ENCODE measurements at regions of chr6 and their contacts with region 1.

Region 1: GRCh38 chr6:79570129-79571029 is 33.1 kb upstream of the LCA5 start:
- DNase-seq: peak; percentile 74
- H3K4me3 ChIP-seq: peak overlapping the region in 1 of 3 experiments; percentile 19
- H3K27ac ChIP-seq: peak overlapping the region; percentile 51
- H3K4me1 ChIP-seq: peaks cover 25% of the 10 kb centered on the region
- H3K27me3 ChIP-seq: no peaks in the 10 kb centered on the region
- CTCF ChIP-seq: peak; percentile 41 to 48
- POLR2A ChIP-seq: no peak

Region 2: GRCh38 chr6:79544939-79545450 is 25.4 kb before region 1 on chr6:
- CTCF ChIA-PET with region 1: interaction called, 18 read pairs
- POLR2A ChIA-PET with region 1: no interaction called
- dilution Hi-C with region 1: no loop called
- intact Hi-C with region 1: loop called (anchors 1 kb)
- DNase-seq: peak; percentile 99
- H3K4me3 ChIP-seq: no peak overlapping the region
- H3K27ac ChIP-seq: peak overlapping the region; percentile 86
- H3K4me1 ChIP-seq: peaks cover 24% of the 10 kb centered on the region
- H3K27me3 ChIP-seq: no peaks in the 10 kb centered on the region
- CTCF ChIP-seq: peak; percentile 60 to 62
- POLR2A ChIP-seq: peak; percentile 28

Region 3: DNA sequence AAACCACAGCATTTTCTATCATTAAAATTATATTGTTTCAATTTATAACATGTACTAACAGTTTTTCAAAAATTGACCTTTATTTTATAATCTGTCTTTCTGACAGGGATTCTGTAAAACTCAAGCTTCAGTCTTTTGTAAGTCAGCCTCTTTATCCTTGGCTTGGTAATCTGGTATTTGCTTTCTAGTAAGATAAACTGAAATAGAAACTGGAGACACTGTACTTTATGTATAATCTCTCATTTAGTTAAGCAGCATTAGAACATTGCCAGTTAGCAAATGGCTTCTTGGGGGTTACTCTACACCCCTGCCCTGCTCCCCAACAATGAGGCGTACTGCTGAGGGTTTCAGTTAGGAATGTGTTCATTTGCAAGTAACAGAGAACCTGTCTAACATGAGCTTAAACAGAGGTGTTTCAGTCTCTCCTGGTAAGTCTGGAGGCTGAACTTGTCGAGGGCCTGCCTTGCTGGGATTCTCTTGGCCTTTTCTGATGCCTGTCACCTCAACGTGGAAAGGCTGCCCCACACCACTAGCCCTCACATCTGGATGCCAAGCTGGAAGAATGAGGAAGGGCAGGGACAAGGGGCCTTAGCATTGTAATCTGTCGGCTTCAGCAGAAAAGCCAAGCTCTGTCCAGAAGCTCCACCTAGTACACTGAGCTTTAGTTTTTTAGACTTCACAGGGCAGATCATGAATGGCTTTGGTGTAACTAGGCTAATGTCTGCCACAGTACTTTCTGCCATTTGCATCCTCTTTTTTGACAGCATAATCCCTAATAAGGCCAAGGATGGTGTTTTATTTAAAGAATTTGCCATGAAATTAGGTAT is 95.6 kb after region 1 on chr6:
- CTCF ChIA-PET with region 1: interaction called, 10 read pairs
- POLR2A ChIA-PET with region 1: no interaction called
- dilution Hi-C with region 1: no loop called
- intact Hi-C with region 1: no loop called
- DNase-seq: no peak
- H3K4me3 ChIP-seq: no peak overlapping the region
- H3K27ac ChIP-seq: no peak overlapping the region
- H3K4me1 ChIP-seq: peaks cover 10% of the 10 kb centered on the region
- H3K27me3 ChIP-seq: no peaks in the 10 kb centered on the region
- CTCF ChIP-seq: no peak
- POLR2A ChIP-seq: no peak

Region 4: DNA sequence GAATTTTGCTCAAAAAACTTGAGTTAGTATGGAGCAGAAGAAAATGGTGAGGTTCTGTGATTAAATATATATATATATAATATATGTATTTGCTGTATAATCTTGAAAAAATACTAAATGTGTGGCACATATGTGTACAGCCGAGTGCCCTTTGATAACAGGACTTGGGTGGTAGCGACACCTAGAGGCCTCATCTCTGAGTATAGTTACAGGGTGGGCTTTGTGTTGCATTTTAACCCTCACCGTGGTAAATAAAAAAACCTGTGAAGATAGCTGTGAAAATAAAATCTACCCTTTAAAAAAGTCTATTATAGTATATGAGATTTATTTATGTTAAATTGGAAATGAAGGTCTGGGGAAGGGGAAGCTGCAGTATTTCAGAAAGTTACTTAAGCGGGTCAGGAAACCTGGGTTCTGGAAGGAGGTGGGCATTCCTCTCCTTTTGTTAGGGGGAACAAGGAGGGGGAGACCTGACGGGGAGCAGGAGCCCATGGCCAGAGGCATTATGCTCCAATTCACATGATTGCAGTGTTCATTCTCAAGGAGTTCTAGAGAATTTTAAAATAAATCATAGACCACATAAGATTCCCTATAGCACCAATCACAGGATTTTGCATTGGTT is 143.4 kb after region 1 on chr6:
- CTCF ChIA-PET with region 1: interaction called, 24 read pairs
- POLR2A ChIA-PET with region 1: interaction called, 4 read pairs
- dilution Hi-C with region 1: no loop called
- intact Hi-C with region 1: loop called (anchors 1 kb)
- DNase-seq: peak; percentile 64
- H3K4me3 ChIP-seq: no peak overlapping the region
- H3K27ac ChIP-seq: no peak overlapping the region
- H3K4me1 ChIP-seq: no peaks in the 10 kb centered on the region
- H3K27me3 ChIP-seq: no peaks in the 10 kb centered on the region
- CTCF ChIP-seq: peak; percentile 51 to 62
- POLR2A ChIP-seq: no peak

Region 5: DNA sequence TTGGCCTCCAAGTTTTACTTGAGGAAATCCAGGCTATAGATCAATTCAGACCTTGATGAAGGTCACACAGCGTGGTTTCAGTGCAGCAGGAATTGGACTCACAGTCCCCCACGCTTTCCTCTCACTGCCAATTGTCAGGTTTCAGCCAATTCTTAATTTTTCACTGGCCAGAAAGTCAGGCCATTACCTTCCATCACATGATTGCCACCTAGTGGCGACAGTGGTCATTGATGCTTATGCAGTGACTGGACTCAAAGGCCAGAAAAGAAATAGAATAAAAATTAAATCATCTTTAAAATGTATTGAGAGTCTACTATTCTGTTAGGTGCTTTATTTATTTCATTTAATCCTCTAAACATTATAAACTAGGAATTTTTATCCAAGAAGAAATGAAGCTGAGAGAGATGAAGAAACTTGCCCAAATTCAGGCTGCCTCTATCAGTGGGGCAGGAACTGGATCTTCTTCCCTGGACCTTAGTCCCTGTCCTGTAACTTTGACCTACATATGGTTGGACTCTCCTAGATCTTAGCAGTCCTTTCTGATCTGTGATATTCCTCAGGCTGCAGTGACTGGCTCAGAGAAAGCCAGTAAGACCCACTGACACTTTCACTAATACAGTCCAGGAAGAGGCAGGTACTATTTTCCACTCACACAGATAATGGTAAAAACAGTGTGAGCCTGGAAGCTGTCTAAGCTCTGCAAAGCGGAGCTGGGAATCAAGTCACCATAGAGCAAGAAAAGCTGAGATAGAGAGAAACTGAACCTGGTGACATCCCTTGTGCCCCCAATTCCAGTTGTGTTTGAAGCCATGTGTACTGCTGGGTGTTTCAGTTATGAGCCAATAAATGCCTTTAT is 243.7 kb after region 1 on chr6:
- CTCF ChIA-PET with region 1: interaction called, 4 read pairs
- POLR2A ChIA-PET with region 1: no interaction called
- dilution Hi-C with region 1: no loop called
- intact Hi-C with region 1: loop called (anchors 1 kb)
- DNase-seq: peak; percentile 73
- H3K4me3 ChIP-seq: no peak overlapping the region
- H3K27ac ChIP-seq: no peak overlapping the region
- H3K4me1 ChIP-seq: no peaks in the 10 kb centered on the region
- H3K27me3 ChIP-seq: peaks cover 6 to 9% of the 10 kb centered on the region in 2 experiments
- CTCF ChIP-seq: peak; percentile 81
- POLR2A ChIP-seq: no peak